Posterior vena cava (tissue), 2 donors: ENCODE measurements at regions of chr13 and their contacts with region 1.

Region 1: GRCh38 chr13:47964863-47965262 is 36.2 kb downstream of the SUCLA2 start:
- DNase-seq: no peak

Region 2: DNA sequence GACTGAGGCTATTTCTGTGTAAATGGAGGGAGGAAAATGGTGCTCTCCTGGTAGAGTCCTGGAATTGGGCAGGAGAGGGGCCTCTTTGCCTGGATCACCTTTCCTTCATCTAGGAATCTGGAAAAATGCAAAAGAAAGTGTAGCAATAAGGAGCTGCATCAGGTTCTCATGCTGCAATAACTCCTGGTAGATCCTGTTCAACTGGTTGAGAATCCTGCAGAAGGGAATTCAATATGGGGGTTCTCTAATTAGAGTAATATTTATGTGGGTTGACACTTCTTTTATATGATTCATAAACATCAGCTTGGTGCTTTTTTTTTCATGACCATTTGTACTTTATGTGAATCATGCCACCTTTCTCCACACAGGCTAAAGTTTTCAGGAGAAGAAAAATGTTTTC is 63.2 kb after region 1 on chr13:
- intact Hi-C with region 1: loop called in 1 of 2 experiments (anchors 2 kb)
- DNase-seq: no peak

Region 3: GRCh38 chr13:48334534-48335127 is 369.8 kb after region 1 on chr13:
- intact Hi-C with region 1: loop called in 1 of 2 experiments (anchors 5 kb)
- DNase-seq: no peak